Dorsolateral prefrontal cortex (tissue), 120 donors: ENCODE measurements at regions of chr3 and their contacts with region 1.

Region 1: GRCh38 chr3:45583021-45583851 is 11.3 kb upstream of the LIMD1 start:
- DNase-seq: peak; percentile 77 to 93 (median 88)
- H3K4me3 ChIP-seq: no peak overlapping the region
- H3K27ac ChIP-seq: peak overlapping the region in 58 of 59 donors; percentile 34 to 93 (median 82)
- H3K27me3 ChIP-seq: peaks cover 0 to 6% (median 0%) of the 10 kb centered on the region in 45 donors
- CTCF ChIP-seq: peak in 10 of 56 donors; percentile 4 to 26 (median 12)

Region 2: DNA sequence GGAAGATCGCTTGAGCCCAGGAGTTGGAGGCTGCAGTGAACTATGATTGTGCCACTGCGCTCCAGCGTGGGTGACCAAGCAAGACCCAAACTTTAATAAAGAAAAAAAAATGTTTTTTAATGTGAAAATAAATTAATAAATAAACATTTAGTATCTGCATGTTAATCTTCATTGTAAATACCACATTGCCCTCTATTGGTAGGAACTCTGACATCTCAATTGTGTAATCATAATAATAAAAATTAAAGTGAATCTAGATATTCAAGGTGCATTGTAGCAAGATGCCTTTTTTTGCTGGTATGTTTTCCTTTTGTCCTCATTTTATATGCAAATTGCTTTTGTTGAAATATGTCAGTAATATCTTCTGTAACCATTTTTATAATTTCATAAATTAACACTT is 83.7 kb before region 1 on chr3:
- intact Hi-C with region 1: no loop called
- DNase-seq: no peak
- H3K4me3 ChIP-seq: no peak overlapping the region
- H3K27ac ChIP-seq: no peak overlapping the region
- H3K27me3 ChIP-seq: no peaks in the 10 kb centered on the region
- CTCF ChIP-seq: peak; percentile 25 to 77 (median 62)

Region 3: GRCh38 chr3:45546716-45547701 is 36.2 kb before region 1 on chr3:
- intact Hi-C with region 1: loop called (anchors 1 kb)
- DNase-seq: peak in 1 of 10 donors; percentile 52
- H3K4me3 ChIP-seq: no peak overlapping the region
- H3K27ac ChIP-seq: peak overlapping the region in 56 of 59 donors; percentile 42 to 98 (median 93)
- H3K27me3 ChIP-seq: no peaks in the 10 kb centered on the region
- CTCF ChIP-seq: peak in 48 of 56 donors; percentile 5 to 64 (median 42)

Region 4: DNA sequence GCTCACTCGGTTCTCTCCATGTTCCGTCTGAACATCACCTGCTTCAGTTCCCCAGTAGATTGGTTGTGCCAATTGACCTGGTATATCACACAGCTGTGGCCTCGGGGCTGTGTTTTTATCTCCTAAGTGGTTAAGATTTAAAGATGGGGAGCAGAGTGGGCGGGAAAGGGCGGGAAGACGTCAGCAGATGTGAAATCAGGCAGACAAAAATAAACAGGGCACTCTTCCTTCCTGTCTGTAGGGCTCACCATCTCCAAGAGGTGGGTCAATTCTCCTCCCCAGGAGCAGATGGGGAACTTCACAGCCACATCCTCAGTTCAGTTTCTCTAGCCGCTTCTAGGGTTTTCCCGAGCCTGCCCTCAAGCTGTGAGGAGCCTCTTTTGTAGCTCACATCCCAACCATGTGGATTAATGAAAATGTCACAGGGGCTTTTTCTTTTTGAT is 15.5 kb before region 1 on chr3:
- intact Hi-C with region 1: loop called in 1 of 2 experiments (anchors 2 kb)
- DNase-seq: no peak
- H3K4me3 ChIP-seq: no peak overlapping the region
- H3K27ac ChIP-seq: peak overlapping the region in 16 of 59 donors; percentile 9 to 74 (median 45)
- H3K27me3 ChIP-seq: peaks cover 0 to 4% (median 0%) of the 10 kb centered on the region in 45 donors
- CTCF ChIP-seq: no peak

Region 5: GRCh38 chr3:45611628-45612081 is 28.4 kb after region 1 on chr3:
- intact Hi-C with region 1: loop called in 1 of 2 experiments (anchors 2 kb)
- DNase-seq: peak in 9 of 10 donors; percentile 55 to 84 (median 81)
- H3K4me3 ChIP-seq: peak overlapping the region in 3 of 59 donors; percentile 16 to 28 (median 22)
- H3K27ac ChIP-seq: peak overlapping the region in 12 of 59 donors; percentile 16 to 73 (median 48)
- H3K27me3 ChIP-seq: no peaks in the 10 kb centered on the region
- CTCF ChIP-seq: peak in 1 of 56 donors; percentile 18